Activated CD4-positive, alpha-beta T cell treated with anti-CD3 and anti-CD28 coated beads, Interleukin-2, amount 10 ng/mL, durations not matched to agents 24 days and 14 days (primary cell): ENCODE measurements at regions of chr12 and their contacts with region 1.

Region 1: DNA sequence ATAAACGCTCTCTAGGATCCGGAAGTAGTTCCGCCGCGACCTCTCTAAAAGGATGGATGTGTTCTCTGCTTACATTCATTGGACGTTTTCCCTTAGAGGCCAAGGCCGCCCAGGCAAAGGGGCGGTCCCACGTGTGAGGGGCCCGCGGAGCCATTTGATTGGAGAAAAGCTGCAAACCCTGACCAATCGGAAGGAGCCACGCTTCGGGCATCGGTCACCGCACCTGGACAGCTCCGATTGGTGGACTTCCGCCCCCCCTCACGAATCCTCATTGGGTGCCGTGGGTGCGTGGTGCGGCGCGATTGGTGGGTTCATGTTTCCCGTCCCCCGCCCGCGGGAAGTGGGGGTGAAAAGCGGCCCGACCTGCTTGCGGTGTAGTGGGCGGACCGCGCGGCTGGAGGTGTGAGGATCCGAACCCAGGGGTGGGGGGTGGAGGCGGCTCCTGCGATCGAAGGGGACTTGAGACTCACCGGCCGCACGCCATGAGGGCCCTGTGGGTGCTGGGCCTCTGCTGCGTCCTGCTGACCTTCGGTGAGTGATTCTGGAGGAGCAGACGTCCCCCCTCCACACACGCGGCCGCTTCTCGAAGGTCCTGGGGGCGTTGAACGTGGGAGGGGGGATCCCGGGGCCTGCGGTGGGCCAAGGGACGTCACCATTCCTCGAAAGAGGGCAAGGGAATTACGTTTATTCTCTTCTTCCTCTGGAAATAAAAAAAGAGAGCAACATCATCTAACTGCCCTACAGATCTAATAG is at the start of gene HSP90B1:
- DNase-seq: peak; percentile 100
- H3K4me3 Mint-ChIP-seq: peak within 1 kb of the TSS; percentile 90
- H3K27ac Mint-ChIP-seq: peak within 1 kb of the TSS; percentile 99
- H3K4me1 Mint-ChIP-seq: peaks cover 63% of the 10 kb centered on the region
- H3K27me3 Mint-ChIP-seq: peaks cover 3% of the 10 kb centered on the region
- total RNA-seq, gene HSP90B1: 449 and 457 TPM in 2 replicates

Region 2: GRCh38 chr12:103840876-103841689 is 89.1 kb before region 1 on chr12 and contains the start of gene NT5DC3:
- intact Hi-C with region 1: loop called (anchors 1 kb)
- DNase-seq: peak; percentile 93
- H3K4me3 Mint-ChIP-seq: peak within 1 kb of the TSS; percentile 85
- H3K27ac Mint-ChIP-seq: peak within 1 kb of the TSS; percentile 86
- H3K4me1 Mint-ChIP-seq: peaks cover 13% of the 10 kb centered on the region
- H3K27me3 Mint-ChIP-seq: peaks cover 33% of the 10 kb centered on the region
- total RNA-seq, gene NT5DC3: 12.3 and 14.9 TPM in 2 replicates

Region 3: DNA sequence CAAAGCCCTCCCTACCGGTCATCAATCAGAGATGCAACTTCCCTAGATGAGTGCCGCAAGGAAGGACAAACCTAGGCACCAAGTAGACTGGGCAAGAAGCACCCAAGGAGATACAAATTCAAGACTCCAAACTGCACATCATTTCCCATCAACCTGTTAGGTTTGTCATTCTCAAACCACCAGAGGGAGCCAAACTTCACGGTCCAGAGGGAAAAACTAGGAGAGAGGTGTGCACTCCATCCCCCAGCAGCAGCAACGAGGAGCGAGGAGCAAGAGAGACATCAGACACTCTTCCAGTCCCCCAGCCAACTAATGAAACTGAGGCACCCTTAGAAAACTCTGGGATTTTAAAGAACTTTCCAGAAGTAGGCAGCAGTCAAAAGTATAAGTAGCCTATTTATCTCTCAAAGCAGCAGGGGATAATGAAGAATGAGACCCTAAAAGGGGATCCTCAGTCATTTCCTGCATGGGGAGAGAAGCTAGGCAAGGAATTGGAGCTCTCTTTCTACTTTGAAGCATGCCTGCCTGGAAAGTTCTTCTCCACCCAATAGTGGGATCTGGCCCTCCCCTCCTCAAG is 52.2 kb before region 1 on chr12:
- intact Hi-C with region 1: loop called (anchors 1 kb)
- DNase-seq: peak; percentile 88
- H3K4me3 Mint-ChIP-seq: no peak overlapping the region
- H3K27ac Mint-ChIP-seq: no peak overlapping the region
- H3K4me1 Mint-ChIP-seq: peaks cover 29% of the 10 kb centered on the region
- H3K27me3 Mint-ChIP-seq: peaks cover 12% of the 10 kb centered on the region

Region 4: GRCh38 chr12:103947871-103948555 is 17.8 kb after region 1 on chr12:
- intact Hi-C with region 1: loop called (anchors 1 kb)
- DNase-seq: no peak
- H3K4me3 Mint-ChIP-seq: no peak overlapping the region
- H3K27ac Mint-ChIP-seq: peak overlapping the region; percentile 75
- H3K4me1 Mint-ChIP-seq: peaks cover 31% of the 10 kb centered on the region
- H3K27me3 Mint-ChIP-seq: no peaks in the 10 kb centered on the region

Region 5: GRCh38 chr12:103956516-103957027 is 26.4 kb after region 1 on chr12:
- intact Hi-C with region 1: loop called (anchors 1 kb)
- DNase-seq: no peak
- H3K4me3 Mint-ChIP-seq: peak overlapping the region; percentile 96
- H3K27ac Mint-ChIP-seq: peak overlapping the region; percentile 97
- H3K4me1 Mint-ChIP-seq: peaks cover 25% of the 10 kb centered on the region
- H3K27me3 Mint-ChIP-seq: no peaks in the 10 kb centered on the region

Region 6: GRCh38 chr12:104064031-104064822 is 134.0 kb after region 1 on chr12 and contains the start of gene HCFC2:
- intact Hi-C with region 1: loop called (anchors 1 kb)
- DNase-seq: peak; percentile 97
- H3K4me3 Mint-ChIP-seq: peak within 1 kb of the TSS; percentile 98
- H3K27ac Mint-ChIP-seq: peak within 1 kb of the TSS; percentile 91
- H3K4me1 Mint-ChIP-seq: peaks cover 20% of the 10 kb centered on the region
- H3K27me3 Mint-ChIP-seq: peaks cover 30% of the 10 kb centered on the region
- total RNA-seq, gene HCFC2: 8.2 and 8.6 TPM in 2 replicates

Region 7: GRCh38 chr12:104137913-104138796 is 207.9 kb after region 1 on chr12 and contains the start of gene NFYB:
- intact Hi-C with region 1: loop called (anchors 1 kb)
- DNase-seq: peak; percentile 98
- H3K4me3 Mint-ChIP-seq: peak within 1 kb of the TSS; percentile 87
- H3K27ac Mint-ChIP-seq: peak within 1 kb of the TSS; percentile 91
- H3K4me1 Mint-ChIP-seq: peaks cover 16% of the 10 kb centered on the region
- H3K27me3 Mint-ChIP-seq: peaks cover 17% of the 10 kb centered on the region
- total RNA-seq, gene NFYB: 25.4 and 28.6 TPM in 2 replicates